WTC11 (cell line): ENCODE measurements at regions of chr14 and their contacts with region 1.

Region 1: DNA sequence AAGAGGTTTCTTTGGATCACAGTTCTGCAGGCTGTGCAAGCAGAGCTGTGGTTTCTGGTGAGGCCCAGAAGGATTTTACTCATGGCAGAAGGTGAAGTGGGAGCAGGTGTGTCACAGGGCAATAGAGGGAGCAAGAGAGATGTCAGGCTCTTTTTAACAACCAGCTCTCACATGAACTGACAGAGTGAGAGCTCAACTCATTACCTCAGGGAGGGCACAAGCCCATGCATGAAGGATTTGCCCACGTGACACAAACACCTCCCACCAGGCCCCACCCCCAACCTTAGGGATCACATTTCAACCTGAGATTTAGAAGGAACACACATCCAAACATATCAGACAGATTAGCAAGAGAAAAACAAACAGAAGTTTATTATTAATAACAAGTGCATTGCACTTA is 470.4 kb downstream of the GALC start:
- DNase-seq: peak; percentile 57
- ATAC-seq: peak; percentile 100
- H3K4me3 Mint-ChIP-seq: no peak overlapping the region
- H3K27ac Mint-ChIP-seq: no peak overlapping the region; the same call in 1 of the 2 replicates
- H3K4me1 Mint-ChIP-seq: peaks cover 8% of the 10 kb centered on the region
- H3K27me3 Mint-ChIP-seq: no peaks in the 10 kb centered on the region
- CTCF ChIP-seq: no peak

Region 2: GRCh38 chr14:87615822-87616679 is 93.5 kb after region 1 on chr14:
- CTCF ChIA-PET with region 1: interaction called, 18 read pairs
- POLR2A ChIA-PET with region 1: no interaction called
- DNase-seq: peak; percentile 76
- ATAC-seq: peak; percentile 98
- H3K4me3 Mint-ChIP-seq: no peak overlapping the region
- H3K27ac Mint-ChIP-seq: no peak overlapping the region
- H3K4me1 Mint-ChIP-seq: no peaks in the 10 kb centered on the region
- H3K27me3 Mint-ChIP-seq: peaks cover 6% of the 10 kb centered on the region
- CTCF ChIP-seq: peak; percentile 79

Region 3: GRCh38 chr14:87767567-87767901 is 245.0 kb after region 1 on chr14:
- CTCF ChIA-PET with region 1: no interaction called
- POLR2A ChIA-PET with region 1: no interaction called
- DNase-seq: no peak
- ATAC-seq: no peak
- H3K4me3 Mint-ChIP-seq: no peak overlapping the region
- H3K27ac Mint-ChIP-seq: no peak overlapping the region
- H3K4me1 Mint-ChIP-seq: peaks cover 11% of the 10 kb centered on the region
- H3K27me3 Mint-ChIP-seq: no peaks in the 10 kb centered on the region; the same call in 1 of the 2 replicates
- CTCF ChIP-seq: no peak